T-cell (primary cell): ENCODE measurements at regions of chrX and their contacts with region 1.

Region 1: DNA sequence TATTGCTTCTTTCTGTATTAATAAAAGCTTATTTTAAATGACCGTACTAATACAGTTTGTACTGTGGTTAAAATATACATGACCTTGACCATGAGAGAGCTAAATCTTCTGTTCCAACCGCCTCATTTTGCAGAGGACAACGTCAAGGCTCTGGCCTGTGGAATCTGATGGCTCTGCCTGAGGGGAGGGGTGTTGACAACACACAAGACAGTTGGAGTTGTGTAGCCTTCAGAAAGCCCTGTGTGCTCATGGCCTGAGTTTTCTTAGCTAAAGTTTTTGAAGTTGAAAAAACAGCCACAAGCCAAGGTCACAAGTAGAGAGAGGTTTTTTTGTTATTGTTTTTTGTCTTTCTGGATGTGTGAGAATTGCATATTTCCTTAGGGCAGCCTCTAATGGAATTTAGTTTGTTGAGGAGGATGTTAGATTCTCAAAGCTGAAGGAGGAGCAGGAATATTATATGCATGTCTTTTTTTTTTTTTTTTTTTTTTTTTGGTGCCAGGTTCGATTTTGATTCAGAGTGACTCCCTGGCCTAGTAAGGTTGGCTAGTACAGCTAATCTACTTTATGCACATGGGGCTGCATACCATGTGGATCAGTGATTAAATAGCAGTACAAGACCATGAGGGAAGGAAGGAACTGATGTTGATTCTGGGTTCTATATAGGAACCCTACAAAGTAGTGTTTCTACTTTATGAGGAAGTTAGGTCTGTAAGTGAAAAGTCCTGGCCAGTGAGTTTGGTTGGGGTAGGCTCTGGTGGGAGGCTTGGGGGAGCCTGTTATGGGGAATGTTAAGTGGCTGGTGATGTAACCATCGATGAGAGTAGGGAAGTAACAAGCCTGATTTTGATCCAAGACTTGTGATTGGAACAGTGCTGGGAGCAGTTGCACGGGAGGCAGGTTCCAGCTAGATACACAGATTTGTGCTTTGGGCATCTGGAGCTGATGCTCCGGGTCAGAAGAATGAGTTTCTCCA is 20.3 kb downstream of the SMS start:
- DNase-seq: no peak
- ATAC-seq: no peak
- H3K4me3 ChIP-seq: no peak overlapping the region
- H3K4me3 Mint-ChIP-seq: no peak overlapping the region
- H3K27ac ChIP-seq: no peak overlapping the region
- H3K27ac Mint-ChIP-seq: no peak overlapping the region
- H3K4me1 ChIP-seq: peaks cover 2 to 8% of the 10 kb centered on the region in 2 experiments
- H3K4me1 Mint-ChIP-seq: peaks cover 31 to 44% (median 35%) of the 10 kb centered on the region in 3 donors
- H3K27me3 ChIP-seq: no peaks in the 10 kb centered on the region
- H3K27me3 Mint-ChIP-seq: peaks cover 0 to 5% of the 10 kb centered on the region in 2 donors

Region 2: GRCh38 chrX:20420058-20420457 is 1540.8 kb before region 1 on chrX:
- CTCF ChIA-PET with region 1: no interaction called
- POLR2A ChIA-PET with region 1: interaction called in 1 of 2 experiments, 23 read pairs
- DNase-seq: no peak
- ATAC-seq: no peak
- H3K4me3 ChIP-seq: no peak overlapping the region
- H3K4me3 Mint-ChIP-seq: no peak overlapping the region
- H3K27ac ChIP-seq: no peak overlapping the region
- H3K27ac Mint-ChIP-seq: peak overlapping the region in 1 of 2 donors; percentile 50
- H3K4me1 ChIP-seq: peaks cover 13 to 16% of the 10 kb centered on the region in 2 experiments
- H3K4me1 Mint-ChIP-seq: peaks cover 28 to 50% (median 33%) of the 10 kb centered on the region in 3 donors
- H3K27me3 ChIP-seq: no peaks in the 10 kb centered on the region
- H3K27me3 Mint-ChIP-seq: peaks cover 0 to 3% of the 10 kb centered on the region in 2 donors

Region 3: DNA sequence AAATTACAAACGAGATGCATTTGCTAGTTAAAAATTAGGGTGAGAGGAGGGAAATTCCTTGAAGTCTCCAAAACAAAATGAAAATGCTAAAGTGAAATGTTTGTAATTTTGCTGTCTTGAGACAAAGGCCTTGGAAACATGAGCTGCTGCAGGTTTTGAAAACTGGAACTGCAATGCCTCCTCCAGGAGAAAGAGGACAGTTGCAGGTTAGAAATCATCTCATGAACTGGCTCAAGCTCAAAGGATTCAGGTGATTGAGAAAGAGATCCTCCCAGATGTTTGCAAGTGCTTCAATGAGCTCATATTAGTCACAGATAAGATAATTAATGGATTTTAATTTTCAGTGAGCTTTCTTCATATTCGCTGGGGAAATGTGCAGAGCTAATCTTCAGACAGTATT is 235.4 kb before region 1 on chrX:
- CTCF ChIA-PET with region 1: no interaction called
- POLR2A ChIA-PET with region 1: no interaction called
- DNase-seq: peak in 3 of 35 experiments; percentile 0 to 39 (median 2)
- ATAC-seq: no peak
- H3K4me3 ChIP-seq: no peak overlapping the region
- H3K4me3 Mint-ChIP-seq: no peak overlapping the region
- H3K27ac ChIP-seq: no peak overlapping the region
- H3K27ac Mint-ChIP-seq: no peak overlapping the region
- H3K4me1 ChIP-seq: no peaks in the 10 kb centered on the region
- H3K4me1 Mint-ChIP-seq: no peaks in the 10 kb centered on the region
- H3K27me3 ChIP-seq: peaks cover 0 to 3% of the 10 kb centered on the region in 2 experiments
- H3K27me3 Mint-ChIP-seq: peaks cover 3 to 31% of the 10 kb centered on the region in 2 donors

Region 4: GRCh38 chrX:22268706-22269105 is 307.9 kb after region 1 on chrX:
- CTCF ChIA-PET with region 1: no interaction called
- POLR2A ChIA-PET with region 1: no interaction called
- DNase-seq: no peak
- ATAC-seq: no peak
- H3K4me3 ChIP-seq: no peak overlapping the region
- H3K4me3 Mint-ChIP-seq: no peak overlapping the region
- H3K27ac ChIP-seq: no peak overlapping the region
- H3K27ac Mint-ChIP-seq: no peak overlapping the region
- H3K4me1 ChIP-seq: no peaks in the 10 kb centered on the region
- H3K4me1 Mint-ChIP-seq: no peaks in the 10 kb centered on the region
- H3K27me3 ChIP-seq: no peaks in the 10 kb centered on the region
- H3K27me3 Mint-ChIP-seq: peaks cover 0 to 4% of the 10 kb centered on the region in 2 donors